A549 (cell line): ENCODE measurements at regions of chr12 and their contacts with region 1.

Region 1: GRCh38 chr12:31272607-31273225 is 53.2 kb downstream of the SINHCAF start:
- DNase-seq: no peak
- ATAC-seq: peak; percentile 42 to 60; a peak in 5 of 6 replicates
- H3K4me3 ChIP-seq: no peak overlapping the region
- H3K27ac ChIP-seq: no peak overlapping the region
- H3K4me1 ChIP-seq: no peaks in the 10 kb centered on the region
- CTCF ChIP-seq: no peak
- EP300 ChIP-seq: no peak
- POLR2A ChIP-seq: no peak
- RAD21 ChIP-seq: no peak

Region 2: GRCh38 chr12:31231611-31232360 is 40.9 kb before region 1 on chr12:
- CTCF ChIA-PET with region 1: interaction called, 12 read pairs
- POLR2A ChIA-PET with region 1: no interaction called
- DNase-seq: no peak
- ATAC-seq: no peak
- H3K4me3 ChIP-seq: no peak overlapping the region
- H3K27ac ChIP-seq: no peak overlapping the region
- H3K4me1 ChIP-seq: peaks cover 9% of the 10 kb centered on the region; the same call in 2 of the 3 replicates
- CTCF ChIP-seq: no peak
- EP300 ChIP-seq: no peak
- POLR2A ChIP-seq: no peak
- RAD21 ChIP-seq: no peak

Region 3: GRCh38 chr12:31245822-31246469 is 26.8 kb before region 1 on chr12:
- CTCF ChIA-PET with region 1: interaction called, 44 read pairs
- POLR2A ChIA-PET with region 1: interaction called, 6 read pairs
- DNase-seq: peak in 1 of 2 experiments; percentile 42
- ATAC-seq: peak; percentile 34 to 83; a peak in 3 of 6 replicates
- H3K4me3 ChIP-seq: no peak overlapping the region
- H3K27ac ChIP-seq: no peak overlapping the region
- H3K4me1 ChIP-seq: no peaks in the 10 kb centered on the region
- CTCF ChIP-seq: no peak
- EP300 ChIP-seq: no peak
- POLR2A ChIP-seq: no peak
- RAD21 ChIP-seq: peak; percentile 15 to 59; a peak in 2 of 5 replicates

Region 4: GRCh38 chr12:31303466-31303865 is 30.8 kb after region 1 on chr12:
- CTCF ChIA-PET with region 1: interaction called, 12 read pairs
- POLR2A ChIA-PET with region 1: no interaction called
- DNase-seq: no peak
- ATAC-seq: no peak
- H3K4me3 ChIP-seq: no peak overlapping the region
- H3K27ac ChIP-seq: no peak overlapping the region
- H3K4me1 ChIP-seq: peaks cover 15% of the 10 kb centered on the region
- CTCF ChIP-seq: no peak
- EP300 ChIP-seq: no peak
- POLR2A ChIP-seq: no peak
- RAD21 ChIP-seq: no peak